Upper lobe of right lung (tissue), 1 donor: ENCODE measurements at regions of chr12 and their contacts with region 1.

Region 1: DNA sequence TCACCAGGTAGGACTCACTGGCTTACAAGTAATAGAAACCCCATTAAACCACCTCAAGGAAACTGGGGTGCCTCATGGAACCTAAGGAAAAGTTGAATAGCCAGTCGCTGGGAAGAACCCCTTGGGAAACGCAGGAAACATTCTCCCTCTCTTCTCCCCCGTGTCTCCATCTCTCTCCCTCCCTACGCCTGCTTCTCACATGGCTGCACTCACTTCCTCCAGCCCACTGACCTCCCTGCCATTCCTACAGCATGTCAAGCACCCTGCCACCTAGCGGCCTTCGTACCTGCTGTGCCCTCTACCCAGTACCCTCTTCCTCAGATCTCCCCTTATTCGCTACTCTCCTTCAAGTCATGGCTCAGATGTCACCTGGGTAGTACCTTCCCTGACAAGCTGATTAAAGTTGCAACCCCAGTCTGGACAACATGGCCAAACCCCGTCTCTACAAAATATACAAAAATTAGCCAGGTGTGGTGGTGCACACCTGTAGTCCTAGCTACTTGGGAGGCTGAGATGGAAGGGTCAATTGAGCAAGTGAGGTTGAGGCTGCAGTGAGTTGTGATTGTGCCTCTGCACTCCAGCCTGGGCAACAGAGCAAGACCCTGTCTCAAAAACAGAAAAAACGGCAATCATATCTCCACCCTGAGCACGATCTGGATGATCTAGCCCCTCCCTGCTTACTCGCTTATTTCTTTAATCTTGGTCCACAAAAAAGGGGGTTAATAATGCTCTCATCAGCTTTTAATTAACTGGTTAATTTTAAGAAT is 6.4 kb upstream of the DTX1 start:
- DNase-seq: peak; percentile 65
- ATAC-seq: peak; percentile 60
- H3K4me3 ChIP-seq: no peak overlapping the region
- H3K27ac ChIP-seq: no peak overlapping the region
- H3K4me1 ChIP-seq: no peaks in the 10 kb centered on the region
- H3K27me3 ChIP-seq: peaks cover under 1% of the 10 kb centered on the region
- CTCF ChIP-seq: no peak

Region 2: GRCh38 chr12:113174461-113175384 is 124.6 kb after region 1 on chr12:
- intact Hi-C with region 1: loop called (anchors 10 kb)
- DNase-seq: peak; percentile 83
- ATAC-seq: peak; percentile 92
- H3K4me3 ChIP-seq: no peak overlapping the region
- H3K27ac ChIP-seq: no peak overlapping the region
- H3K4me1 ChIP-seq: peaks cover 4% of the 10 kb centered on the region
- H3K27me3 ChIP-seq: no peaks in the 10 kb centered on the region
- CTCF ChIP-seq: peak; percentile 99

Region 3: DNA sequence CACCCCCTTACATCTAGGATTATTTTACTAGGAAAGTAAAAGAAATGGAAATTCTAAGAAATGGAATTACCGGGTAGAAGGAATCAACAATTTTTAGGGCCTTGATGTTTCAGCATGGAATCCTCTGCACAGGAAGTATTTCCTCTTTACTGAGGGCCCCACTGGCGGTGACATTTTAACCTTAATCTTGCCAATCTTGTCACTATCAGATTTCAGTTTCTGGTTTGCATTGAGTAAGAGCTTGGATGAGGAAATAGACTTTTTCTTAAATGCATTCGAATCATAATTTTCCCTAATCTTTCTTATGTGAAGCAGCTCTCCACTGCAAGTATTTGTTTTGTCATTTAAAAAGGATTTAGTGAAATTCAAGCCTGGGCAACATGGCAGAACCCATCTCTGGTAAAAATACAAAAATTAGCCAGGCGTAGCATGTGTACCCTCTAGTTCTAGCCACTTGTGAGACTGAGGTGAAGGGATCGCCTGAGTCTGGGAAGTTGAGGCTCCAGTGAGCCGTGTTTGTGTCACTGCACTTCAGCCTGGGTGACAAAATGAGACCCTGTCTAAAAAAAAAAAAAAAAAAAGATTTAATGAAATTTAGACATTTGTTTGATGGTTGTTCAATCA is 211.8 kb after region 1 on chr12:
- intact Hi-C with region 1: no loop called
- DNase-seq: no peak
- ATAC-seq: peak; percentile 38
- H3K4me3 ChIP-seq: no peak overlapping the region
- H3K27ac ChIP-seq: peak overlapping the region; percentile 56
- H3K4me1 ChIP-seq: peaks cover 38% of the 10 kb centered on the region
- H3K27me3 ChIP-seq: no peaks in the 10 kb centered on the region
- CTCF ChIP-seq: no peak